Activated CD4-positive, alpha-beta T cell treated with anti-CD3 and anti-CD28 coated beads for 36 hours (primary cell): ENCODE measurements at regions of chr7 and their contacts with region 1.

Region 1: DNA sequence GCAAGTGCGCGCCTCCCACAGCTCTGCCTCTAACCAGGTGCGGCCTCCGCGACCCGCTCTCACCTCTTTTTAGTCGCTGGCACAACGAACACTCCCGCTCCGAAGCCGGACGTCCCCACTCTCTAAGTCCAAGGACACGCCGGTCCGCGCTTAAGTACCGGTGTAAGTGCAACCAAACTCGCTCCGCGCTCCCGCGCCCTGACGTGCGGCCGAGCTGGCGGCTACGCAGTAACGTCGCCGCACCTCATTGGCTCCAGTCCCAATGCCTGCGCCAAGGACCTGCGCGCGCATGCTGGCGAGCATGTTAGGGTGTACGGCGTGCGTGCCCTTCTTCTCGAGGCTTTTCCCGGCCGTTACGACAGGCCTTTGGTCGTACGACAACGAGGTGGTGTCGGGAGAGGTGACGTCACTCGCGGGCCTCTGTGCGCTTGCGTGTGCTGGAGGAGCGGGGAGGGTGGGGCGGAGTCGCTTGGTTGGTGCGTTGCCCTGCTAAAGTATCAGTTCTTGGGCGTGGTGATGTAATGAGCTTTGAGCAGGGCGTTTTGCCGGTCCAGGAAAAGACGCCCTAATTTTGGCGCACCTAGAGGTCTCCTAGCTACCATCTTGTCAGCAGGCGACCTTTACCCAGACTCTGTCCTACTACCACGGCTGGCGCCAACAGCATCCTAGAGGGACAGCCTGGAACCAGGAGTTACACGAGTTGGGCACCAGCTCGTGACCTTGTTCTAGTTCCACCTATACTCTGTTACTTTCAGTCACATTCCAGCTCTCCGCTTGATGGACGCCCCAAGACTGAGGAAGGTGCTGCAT is at the start of gene CYCS:
- DNase-seq: peak; percentile 100
- ATAC-seq: peak; percentile 97
- H3K4me3 Mint-ChIP-seq: peak within 1 kb of the TSS; percentile 97
- H3K27ac Mint-ChIP-seq: peak within 1 kb of the TSS; percentile 98
- H3K4me1 Mint-ChIP-seq: peaks cover 27% of the 10 kb centered on the region
- H3K27me3 Mint-ChIP-seq: no peaks in the 10 kb centered on the region
- total RNA-seq, gene CYCS: 222 to 237 TPM

Region 2: DNA sequence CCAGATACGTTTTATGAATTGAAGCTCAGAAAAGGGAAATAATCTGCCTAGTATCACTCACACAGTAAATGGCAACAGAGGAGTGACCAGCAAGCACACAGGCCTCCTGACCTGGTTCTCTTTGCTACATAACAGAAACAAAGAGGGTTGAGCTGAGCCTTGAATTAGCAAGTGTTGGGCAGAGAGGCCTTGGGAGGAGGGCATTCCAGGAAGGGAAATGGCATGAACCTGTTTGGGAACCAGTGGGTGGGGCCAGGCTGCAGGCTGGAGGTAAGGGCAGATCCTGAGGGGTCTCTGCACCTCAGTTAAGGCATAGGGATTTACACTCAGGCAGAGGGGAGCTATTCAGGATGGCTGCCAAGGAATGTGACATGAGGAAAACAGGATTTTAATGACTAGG is 24.5 kb after region 1 on chr7:
- CTCF ChIA-PET with region 1: interaction called, 4 read pairs
- POLR2A ChIA-PET with region 1: interaction called, 3 read pairs
- intact Hi-C with region 1: loop called in 1 of 2 experiments (anchors 1 kb)
- DNase-seq: no peak
- ATAC-seq: no peak
- H3K4me3 Mint-ChIP-seq: no peak overlapping the region
- H3K27ac Mint-ChIP-seq: peak overlapping the region; percentile 90
- H3K4me1 Mint-ChIP-seq: peaks cover 25% of the 10 kb centered on the region
- H3K27me3 Mint-ChIP-seq: no peaks in the 10 kb centered on the region

Region 3: GRCh38 chr7:25167262-25167843 is 42.0 kb after region 1 on chr7:
- CTCF ChIA-PET with region 1: no interaction called
- POLR2A ChIA-PET with region 1: no interaction called
- intact Hi-C with region 1: loop called in 1 of 2 experiments (anchors 5 kb)
- DNase-seq: no peak
- ATAC-seq: no peak
- H3K4me3 Mint-ChIP-seq: no peak overlapping the region
- H3K27ac Mint-ChIP-seq: no peak overlapping the region
- H3K4me1 Mint-ChIP-seq: no peaks in the 10 kb centered on the region
- H3K27me3 Mint-ChIP-seq: no peaks in the 10 kb centered on the region

Region 4: DNA sequence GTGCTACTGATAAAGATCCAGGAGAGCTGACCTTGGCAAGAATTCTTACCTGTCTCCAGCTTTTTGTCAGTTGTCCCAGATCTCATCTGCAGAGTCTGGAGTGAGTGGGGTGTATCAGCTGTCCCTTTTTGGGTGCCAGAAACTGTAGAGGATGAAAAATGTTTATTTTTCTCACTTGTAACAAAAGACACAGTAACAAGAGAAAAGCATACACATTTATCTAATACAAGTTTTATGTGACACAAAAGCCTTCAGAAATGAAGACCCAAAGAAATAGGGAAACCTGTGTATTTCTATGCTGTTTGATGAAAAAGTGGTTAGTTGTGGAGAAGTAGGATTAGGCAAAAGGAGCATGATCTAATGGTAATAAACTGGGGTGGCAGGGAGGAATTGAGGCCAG is 161.4 kb after region 1 on chr7:
- CTCF ChIA-PET with region 1: no interaction called
- POLR2A ChIA-PET with region 1: interaction called, 12 read pairs
- intact Hi-C with region 1: no loop called
- DNase-seq: no peak
- ATAC-seq: no peak
- H3K4me3 Mint-ChIP-seq: no peak overlapping the region
- H3K27ac Mint-ChIP-seq: no peak overlapping the region
- H3K4me1 Mint-ChIP-seq: no peaks in the 10 kb centered on the region
- H3K27me3 Mint-ChIP-seq: no peaks in the 10 kb centered on the region